Caco-2 (cell line): ENCODE measurements at regions of chr19 and their contacts with region 1.

Region 1: GRCh38 chr19:10478903-10479384 is 24.2 kb downstream of the KEAP1 start:
- DNase-seq: peak; percentile 93 to 95
- H3K4me3 ChIP-seq: peak overlapping the region; percentile 32
- H3K4me3 Mint-ChIP-seq: peak overlapping the region; percentile 84
- H3K27ac Mint-ChIP-seq: peak overlapping the region; percentile 73
- H3K4me1 ChIP-seq: peaks cover 5% of the 10 kb centered on the region; the same call in 1 of the 2 replicates
- H3K4me1 Mint-ChIP-seq: no peaks in the 10 kb centered on the region
- H3K27me3 ChIP-seq: no peaks in the 10 kb centered on the region
- H3K27me3 Mint-ChIP-seq: no peaks in the 10 kb centered on the region
- CTCF ChIP-seq: peak; percentile 75 to 85

Region 2: GRCh38 chr19:10491472-10492047 is 12.6 kb after region 1 on chr19:
- CTCF ChIA-PET with region 1: interaction called, 10 read pairs
- POLR2A ChIA-PET with region 1: interaction called, 3 read pairs
- intact Hi-C with region 1: no loop called
- DNase-seq: no peak
- H3K4me3 ChIP-seq: no peak overlapping the region
- H3K4me3 Mint-ChIP-seq: no peak overlapping the region
- H3K27ac Mint-ChIP-seq: no peak overlapping the region
- H3K4me1 ChIP-seq: no peaks in the 10 kb centered on the region
- H3K4me1 Mint-ChIP-seq: no peaks in the 10 kb centered on the region
- H3K27me3 ChIP-seq: no peaks in the 10 kb centered on the region
- H3K27me3 Mint-ChIP-seq: no peaks in the 10 kb centered on the region
- CTCF ChIP-seq: no peak